Activated CD4-positive, alpha-beta memory T cell treated with anti-CD3 and anti-CD28 coated beads for 36 hours (primary cell): ENCODE measurements at regions of chr11 and their contacts with region 1.

Region 1: DNA sequence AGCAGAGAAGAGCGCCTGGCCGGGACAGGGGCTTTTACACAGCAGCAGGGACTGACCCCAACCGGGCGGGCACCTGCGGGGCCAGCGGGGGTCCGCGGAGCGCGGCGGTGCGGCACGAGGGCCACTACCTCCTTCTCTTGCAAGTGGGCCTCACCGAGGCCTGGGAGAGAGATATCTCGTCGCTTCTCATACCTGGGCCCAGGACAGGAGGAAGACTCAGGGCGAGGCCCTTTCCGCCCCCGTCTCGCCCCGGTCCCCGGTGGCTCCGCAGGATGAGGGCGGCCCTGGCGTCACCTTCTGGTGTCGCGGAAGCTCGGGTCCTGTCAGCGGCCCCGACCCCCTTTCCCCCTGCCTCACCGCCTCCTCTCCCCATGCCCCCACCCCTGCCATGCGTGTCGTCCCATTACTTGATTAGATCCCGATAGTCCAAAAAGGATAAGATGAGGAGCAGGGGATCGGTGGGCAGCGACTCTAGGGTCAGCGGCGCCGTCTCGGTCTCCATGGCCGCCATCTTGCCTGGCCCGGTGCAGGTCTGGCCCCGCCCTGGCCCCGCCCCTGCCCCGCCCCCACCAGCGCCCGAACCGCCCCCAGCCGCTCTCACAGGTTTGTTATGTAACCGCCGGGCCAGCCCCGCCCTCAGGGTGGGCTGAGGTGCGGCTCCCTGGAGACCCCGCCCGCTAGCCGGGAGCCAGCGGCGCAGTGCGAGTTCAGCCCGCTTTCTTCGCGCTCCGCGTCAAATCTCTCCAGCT is at the start of gene FBXO3:
- DNase-seq: peak; percentile 84
- H3K4me3 Mint-ChIP-seq: peak within 1 kb of the TSS; percentile 95
- H3K27ac Mint-ChIP-seq: peak within 1 kb of the TSS; percentile 89
- H3K4me1 Mint-ChIP-seq: peaks cover 48% of the 10 kb centered on the region
- H3K27me3 Mint-ChIP-seq: peaks cover 8% of the 10 kb centered on the region
- total RNA-seq, gene FBXO3: 16.5 to 17.7 TPM

Region 2: DNA sequence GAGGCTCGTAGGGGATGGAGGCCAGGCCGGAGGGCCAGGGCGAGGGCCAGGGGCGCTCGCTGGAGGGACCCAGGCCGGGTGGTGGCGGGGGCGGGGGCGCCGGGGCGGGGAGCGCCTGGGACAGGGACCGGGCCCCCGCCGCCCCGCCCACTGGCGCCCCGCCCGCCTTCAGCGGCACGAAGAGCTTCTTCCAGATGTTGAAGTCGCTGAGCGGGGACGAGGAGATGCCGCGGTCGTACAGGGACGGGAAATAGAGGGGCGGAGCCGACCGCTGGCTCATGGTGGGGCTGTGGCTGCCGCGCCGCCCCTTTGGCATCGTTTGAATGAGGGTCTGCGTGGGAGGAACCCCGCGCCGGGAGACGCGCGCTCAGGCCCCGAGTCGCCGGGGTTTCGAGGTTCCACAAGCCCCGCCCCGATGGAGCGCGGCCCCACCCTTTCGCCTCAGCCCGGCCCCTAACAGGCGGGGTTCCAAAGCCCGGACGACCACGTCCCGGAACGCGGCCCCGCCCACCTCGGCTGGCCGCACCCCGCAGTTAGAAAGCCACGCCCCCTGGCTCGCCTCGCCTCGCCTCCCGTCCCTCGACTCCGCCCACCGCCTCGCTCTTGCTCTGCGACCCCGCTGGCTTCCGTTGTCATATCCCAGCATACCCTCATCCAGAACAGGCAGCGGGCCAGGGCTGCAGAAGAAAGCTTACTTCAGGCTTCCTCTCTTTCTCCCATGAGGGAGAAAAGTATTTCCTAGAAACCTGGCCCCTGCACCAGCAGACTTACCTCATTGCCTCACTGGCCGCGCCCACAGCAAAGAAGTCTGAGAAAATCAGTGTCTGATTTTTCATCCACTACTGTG is 73.5 kb before region 1 on chr11 and contains the start of gene C11orf91:
- CTCF ChIA-PET with region 1: no interaction called
- POLR2A ChIA-PET with region 1: no interaction called
- intact Hi-C with region 1: loop called (anchors 1 kb)
- DNase-seq: peak; percentile 96
- H3K4me3 Mint-ChIP-seq: peak within 1 kb of the TSS; percentile 83
- H3K27ac Mint-ChIP-seq: peak within 1 kb of the TSS; percentile 39
- H3K4me1 Mint-ChIP-seq: peaks cover 11% of the 10 kb centered on the region
- H3K27me3 Mint-ChIP-seq: peaks cover 14% of the 10 kb centered on the region
- total RNA-seq, gene C11orf91: not detected

Region 3: GRCh38 chr11:33722579-33723225 is 51.5 kb before region 1 on chr11:
- CTCF ChIA-PET with region 1: no interaction called
- POLR2A ChIA-PET with region 1: no interaction called
- intact Hi-C with region 1: loop called (anchors 5 kb)
- DNase-seq: peak; percentile 82
- H3K4me3 Mint-ChIP-seq: no peak overlapping the region
- H3K27ac Mint-ChIP-seq: peak overlapping the region; percentile 81
- H3K4me1 Mint-ChIP-seq: peaks cover 46% of the 10 kb centered on the region
- H3K27me3 Mint-ChIP-seq: no peaks in the 10 kb centered on the region

Region 4: DNA sequence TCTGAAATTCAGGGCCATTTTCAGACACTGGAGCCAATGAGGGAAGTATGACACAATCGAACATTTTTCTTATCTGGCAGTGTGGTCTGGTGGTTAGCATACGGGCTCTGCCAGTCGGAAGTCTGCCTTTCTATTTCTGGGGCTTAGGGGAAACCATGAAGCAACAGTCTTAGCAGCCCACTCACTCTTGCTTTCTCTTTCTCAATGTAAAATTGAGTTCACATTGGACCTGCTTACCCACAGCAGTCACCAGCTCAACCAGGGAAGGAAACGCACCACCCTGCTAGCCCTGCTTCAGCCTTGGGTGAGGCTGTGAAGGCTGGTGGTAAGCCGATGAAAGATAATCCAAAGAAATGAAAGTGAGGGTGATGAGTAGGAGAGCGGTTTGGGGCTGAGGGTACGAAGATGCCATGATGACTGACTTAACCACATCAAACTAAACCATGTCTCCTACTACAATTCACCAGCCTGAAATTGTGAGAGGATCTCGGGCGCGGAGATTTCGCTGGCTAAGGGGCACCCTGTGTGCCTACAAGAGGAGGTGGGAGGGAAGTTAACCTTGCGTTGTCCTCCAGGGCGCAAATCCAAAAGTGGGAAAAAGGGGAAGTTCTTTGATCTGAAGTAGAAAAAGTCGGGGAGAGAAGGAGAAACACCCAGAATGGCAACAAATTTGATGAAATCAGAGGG is 119.7 kb after region 1 on chr11:
- CTCF ChIA-PET with region 1: no interaction called
- POLR2A ChIA-PET with region 1: no interaction called
- intact Hi-C with region 1: no loop called
- DNase-seq: peak; percentile 88
- H3K4me3 Mint-ChIP-seq: peak overlapping the region; percentile 25
- H3K27ac Mint-ChIP-seq: no peak overlapping the region
- H3K4me1 Mint-ChIP-seq: peaks cover 31% of the 10 kb centered on the region
- H3K27me3 Mint-ChIP-seq: peaks cover 73% of the 10 kb centered on the region